H1 (cell line): ENCODE measurements at regions of chr5 and their contacts with region 1.

Region 1: GRCh38 chr5:44603525-44604272 is 205.0 kb upstream of the MRPS30 start:
- DNase-seq: peak in 1 of 2 experiments; percentile 75
- H3K4me3 ChIP-seq: no peak overlapping the region
- H3K27ac ChIP-seq: no peak overlapping the region
- H3K4me1 ChIP-seq: no peaks in the 10 kb centered on the region
- H3K27me3 ChIP-seq: no peaks in the 10 kb centered on the region
- CTCF ChIP-seq: peak; percentile 33 to 58 (median 57)
- EP300 ChIP-seq: no peak
- POLR2A ChIP-seq: no peak
- RAD21 ChIP-seq: peak; percentile 53 to 64

Region 2: GRCh38 chr5:44613936-44614335 is 10.2 kb after region 1 on chr5:
- CTCF ChIA-PET with region 1: interaction called, 35 read pairs
- POLR2A ChIA-PET with region 1: no interaction called
- DNase-seq: no peak
- H3K4me3 ChIP-seq: no peak overlapping the region
- H3K27ac ChIP-seq: no peak overlapping the region
- H3K4me1 ChIP-seq: no peaks in the 10 kb centered on the region
- H3K27me3 ChIP-seq: no peaks in the 10 kb centered on the region
- CTCF ChIP-seq: no peak
- EP300 ChIP-seq: no peak
- POLR2A ChIP-seq: no peak
- RAD21 ChIP-seq: no peak

Region 3: DNA sequence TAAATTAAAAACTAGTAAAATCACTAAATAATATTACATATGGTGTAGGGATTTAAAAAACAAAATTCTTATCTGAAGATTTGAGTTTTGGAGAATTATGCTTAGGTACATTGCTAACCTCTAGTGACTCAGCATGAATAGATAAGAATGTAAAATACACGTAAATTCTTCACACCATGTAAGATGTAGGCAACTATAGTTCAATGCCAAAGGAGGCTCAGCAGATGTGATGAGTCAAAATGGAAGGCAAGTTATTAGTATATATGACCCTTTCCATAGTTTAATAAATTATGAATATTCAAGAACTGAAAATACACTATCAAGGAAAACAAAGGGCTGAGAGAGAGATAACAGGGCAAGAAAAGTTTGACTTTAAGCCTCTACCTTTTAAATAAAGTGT is 284.0 kb after region 1 on chr5:
- CTCF ChIA-PET with region 1: no interaction called
- POLR2A ChIA-PET with region 1: no interaction called
- DNase-seq: no peak
- H3K4me3 ChIP-seq: no peak overlapping the region
- H3K27ac ChIP-seq: no peak overlapping the region
- H3K4me1 ChIP-seq: no peaks in the 10 kb centered on the region
- H3K27me3 ChIP-seq: no peaks in the 10 kb centered on the region
- CTCF ChIP-seq: no peak
- EP300 ChIP-seq: no peak
- POLR2A ChIP-seq: no peak
- RAD21 ChIP-seq: no peak